ENCODE measurements at regions of chr9 and their contacts with region 1.

Region 1: GRCh38 chr9:126558051-126558665 is 55.6 kb upstream of the LMX1B start:
- DNase-seq: peak; percentile 33 to 85 (median 68)
- ATAC-seq: peak; percentile 88
- H3K4me3 ChIP-seq: no peak overlapping the region
- H3K4me3 Mint-ChIP-seq: no peak overlapping the region
- H3K27ac ChIP-seq: no peak overlapping the region
- H3K27ac Mint-ChIP-seq: no peak overlapping the region
- H3K4me1 ChIP-seq: no peaks in the 10 kb centered on the region
- H3K4me1 Mint-ChIP-seq: no peaks in the 10 kb centered on the region
- H3K27me3 ChIP-seq: peaks cover 3 to 4% of the 10 kb centered on the region in 2 experiments
- H3K27me3 Mint-ChIP-seq: peaks cover 27% of the 10 kb centered on the region
- CTCF ChIP-seq: peak; percentile 80

Region 2: GRCh38 chr9:125407974-125408900 is 1149.9 kb before region 1 on chr9:
- CTCF ChIA-PET with region 1: no interaction called
- POLR2A ChIA-PET with region 1: no interaction called
- intact Hi-C with region 1: loop called in 1 of 2 experiments (anchors 5 kb)
- DNase-seq: peak; percentile 60 to 86 (median 78)
- ATAC-seq: peak; percentile 82
- H3K4me3 ChIP-seq: peak overlapping the region; percentile 29 to 58
- H3K4me3 Mint-ChIP-seq: peak overlapping the region; percentile 70
- H3K27ac ChIP-seq: no peak overlapping the region
- H3K27ac Mint-ChIP-seq: no peak overlapping the region
- H3K4me1 ChIP-seq: peaks cover 6% of the 10 kb centered on the region
- H3K4me1 Mint-ChIP-seq: peaks cover 10% of the 10 kb centered on the region
- H3K27me3 ChIP-seq: peaks cover 8 to 20% of the 10 kb centered on the region in 2 experiments
- H3K27me3 Mint-ChIP-seq: peaks cover 27% of the 10 kb centered on the region
- CTCF ChIP-seq: peak; percentile 84

Region 3: DNA sequence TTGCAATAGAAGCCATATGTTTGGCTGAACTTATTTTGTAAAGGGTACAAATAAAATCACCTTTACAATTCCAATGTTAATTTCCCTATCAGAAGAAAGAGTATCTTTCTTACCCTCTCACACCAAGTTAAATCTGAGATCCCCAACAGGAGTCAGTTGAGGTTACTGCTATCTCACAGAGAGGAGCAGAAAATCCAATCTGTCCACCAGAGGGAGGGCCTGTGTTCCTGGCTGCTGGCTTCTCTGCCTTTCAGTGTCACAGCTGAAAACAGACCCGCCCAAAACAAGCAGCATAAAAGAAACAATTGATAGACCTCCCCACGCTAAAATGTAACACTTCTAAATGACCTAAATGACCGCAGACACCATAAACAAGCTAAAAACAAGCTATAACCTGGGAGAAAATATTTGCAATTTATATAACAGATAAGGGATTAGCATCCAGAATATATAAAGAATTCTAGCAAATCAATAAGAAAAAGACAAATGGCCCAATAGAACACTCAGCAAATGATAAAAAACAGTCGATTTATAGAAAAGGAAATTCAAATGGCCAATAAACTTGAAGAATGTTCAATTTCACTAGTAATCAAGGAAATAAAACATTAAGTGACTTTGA is 256.1 kb before region 1 on chr9:
- CTCF ChIA-PET with region 1: interaction called, 4 read pairs
- POLR2A ChIA-PET with region 1: no interaction called
- intact Hi-C with region 1: loop called (anchors 5 to 10 kb)
- DNase-seq: peak; percentile 22 to 79 (median 59)
- ATAC-seq: peak; percentile 87
- H3K4me3 ChIP-seq: no peak overlapping the region
- H3K4me3 Mint-ChIP-seq: no peak overlapping the region
- H3K27ac ChIP-seq: no peak overlapping the region
- H3K27ac Mint-ChIP-seq: no peak overlapping the region
- H3K4me1 ChIP-seq: no peaks in the 10 kb centered on the region
- H3K4me1 Mint-ChIP-seq: peaks cover 3% of the 10 kb centered on the region
- H3K27me3 ChIP-seq: no peaks in the 10 kb centered on the region
- H3K27me3 Mint-ChIP-seq: peaks cover 4% of the 10 kb centered on the region
- CTCF ChIP-seq: peak; percentile 71

Region 4: GRCh38 chr9:126514047-126514821 is 43.9 kb before region 1 on chr9:
- CTCF ChIA-PET with region 1: interaction called, 108 read pairs
- POLR2A ChIA-PET with region 1: interaction called, 3 read pairs
- intact Hi-C with region 1: loop called (anchors 1 to 5 kb)
- DNase-seq: peak; percentile 29 to 78 (median 58)
- ATAC-seq: peak; percentile 89
- H3K4me3 ChIP-seq: no peak overlapping the region
- H3K4me3 Mint-ChIP-seq: peak overlapping the region; percentile 8
- H3K27ac ChIP-seq: no peak overlapping the region
- H3K27ac Mint-ChIP-seq: no peak overlapping the region
- H3K4me1 ChIP-seq: peaks cover 17% of the 10 kb centered on the region
- H3K4me1 Mint-ChIP-seq: peaks cover 28% of the 10 kb centered on the region
- H3K27me3 ChIP-seq: peaks cover 9 to 15% of the 10 kb centered on the region in 2 experiments
- H3K27me3 Mint-ChIP-seq: peaks cover 56% of the 10 kb centered on the region
- CTCF ChIP-seq: peak; percentile 34

Region 5: GRCh38 chr9:126526218-126527108 is 31.7 kb before region 1 on chr9:
- CTCF ChIA-PET with region 1: interaction called, 11 read pairs
- POLR2A ChIA-PET with region 1: no interaction called
- intact Hi-C with region 1: no loop called
- DNase-seq: no peak
- ATAC-seq: no peak
- H3K4me3 ChIP-seq: no peak overlapping the region
- H3K4me3 Mint-ChIP-seq: no peak overlapping the region
- H3K27ac ChIP-seq: no peak overlapping the region
- H3K27ac Mint-ChIP-seq: no peak overlapping the region
- H3K4me1 ChIP-seq: peaks cover 6% of the 10 kb centered on the region
- H3K4me1 Mint-ChIP-seq: peaks cover 14% of the 10 kb centered on the region
- H3K27me3 ChIP-seq: no peaks in the 10 kb centered on the region
- H3K27me3 Mint-ChIP-seq: peaks cover 6% of the 10 kb centered on the region
- CTCF ChIP-seq: no peak

Region 6: DNA sequence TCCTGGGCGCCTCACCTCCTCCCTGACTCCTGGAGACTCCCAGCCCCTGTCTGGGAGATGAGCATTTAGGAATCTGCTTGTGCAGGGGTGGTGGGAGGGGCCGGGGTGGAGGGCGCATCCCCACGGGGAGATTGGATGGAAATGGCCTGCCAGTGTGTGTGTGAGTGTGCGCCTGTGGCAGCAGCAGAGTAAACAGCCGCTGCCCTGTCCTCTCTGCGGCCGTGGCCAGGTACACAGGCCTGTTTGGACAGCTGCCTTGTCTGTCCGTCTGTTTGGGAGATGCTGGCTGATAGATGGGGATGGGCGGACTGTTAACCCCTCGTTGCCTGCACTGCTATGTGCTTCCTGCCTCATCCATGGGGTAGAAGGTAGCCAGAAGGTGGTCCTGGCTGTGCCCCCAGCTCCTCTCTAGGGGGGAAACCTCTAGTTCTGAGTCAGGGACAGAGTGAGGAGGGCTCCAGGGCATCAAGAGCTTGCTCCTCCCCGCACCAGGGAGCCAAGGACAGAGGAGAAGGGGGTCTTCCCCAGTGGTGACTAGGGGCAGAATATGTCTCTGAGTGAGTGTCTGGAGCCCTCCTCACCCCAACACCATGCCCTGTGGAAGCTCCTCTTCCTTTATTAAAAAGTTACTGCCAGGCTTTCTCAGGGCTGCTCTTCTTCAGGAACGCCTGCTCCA is 115.7 kb after region 1 on chr9:
- CTCF ChIA-PET with region 1: no interaction called
- POLR2A ChIA-PET with region 1: no interaction called
- intact Hi-C with region 1: no loop called
- DNase-seq: no peak
- ATAC-seq: no peak
- H3K4me3 ChIP-seq: no peak overlapping the region
- H3K4me3 Mint-ChIP-seq: no peak overlapping the region
- H3K27ac ChIP-seq: no peak overlapping the region
- H3K27ac Mint-ChIP-seq: no peak overlapping the region
- H3K4me1 ChIP-seq: no peaks in the 10 kb centered on the region
- H3K4me1 Mint-ChIP-seq: peaks cover 6% of the 10 kb centered on the region
- H3K27me3 ChIP-seq: peaks cover 14 to 16% of the 10 kb centered on the region in 2 experiments
- H3K27me3 Mint-ChIP-seq: peaks cover 44% of the 10 kb centered on the region
- CTCF ChIP-seq: no peak